ENCODE measurements at regions of chr7 and their contacts with region 1.

Region 1: DNA sequence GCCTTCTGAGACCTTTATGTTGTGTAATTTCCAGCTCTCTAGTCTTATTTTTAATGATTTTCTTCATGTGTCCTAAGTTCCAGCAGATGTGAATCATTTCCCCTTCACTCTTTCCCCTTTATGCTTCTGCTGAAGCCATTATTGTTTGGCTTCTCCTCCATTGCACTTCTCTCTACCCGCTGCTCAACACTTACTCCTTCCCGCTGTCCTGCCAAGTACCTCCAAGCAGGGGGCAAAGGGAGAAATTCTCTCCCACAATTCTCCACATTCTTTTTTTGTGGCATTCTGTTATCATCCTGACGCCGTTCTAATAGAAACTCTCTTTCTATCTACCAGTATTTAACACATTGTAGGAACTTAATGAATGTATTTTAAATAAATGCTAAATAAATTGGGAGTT is 388.9 kb upstream of the TPK1 start:
- DNase-seq: no peak
- H3K4me3 ChIP-seq: no peak overlapping the region
- H3K27ac ChIP-seq: no peak overlapping the region
- H3K4me1 ChIP-seq: no peaks in the 10 kb centered on the region
- H3K27me3 ChIP-seq: no peaks in the 10 kb centered on the region
- CTCF ChIP-seq: no peak

Region 2: GRCh38 chr7:145175366-145175765 is 49.4 kb before region 1 on chr7:
- CTCF ChIA-PET with region 1: no interaction called
- POLR2A ChIA-PET with region 1: no interaction called
- intact Hi-C with region 1: loop called (anchors 1 kb)
- DNase-seq: no peak
- H3K4me3 ChIP-seq: no peak overlapping the region
- H3K27ac ChIP-seq: no peak overlapping the region
- H3K4me1 ChIP-seq: no peaks in the 10 kb centered on the region
- H3K27me3 ChIP-seq: no peaks in the 10 kb centered on the region
- CTCF ChIP-seq: no peak

Region 3: DNA sequence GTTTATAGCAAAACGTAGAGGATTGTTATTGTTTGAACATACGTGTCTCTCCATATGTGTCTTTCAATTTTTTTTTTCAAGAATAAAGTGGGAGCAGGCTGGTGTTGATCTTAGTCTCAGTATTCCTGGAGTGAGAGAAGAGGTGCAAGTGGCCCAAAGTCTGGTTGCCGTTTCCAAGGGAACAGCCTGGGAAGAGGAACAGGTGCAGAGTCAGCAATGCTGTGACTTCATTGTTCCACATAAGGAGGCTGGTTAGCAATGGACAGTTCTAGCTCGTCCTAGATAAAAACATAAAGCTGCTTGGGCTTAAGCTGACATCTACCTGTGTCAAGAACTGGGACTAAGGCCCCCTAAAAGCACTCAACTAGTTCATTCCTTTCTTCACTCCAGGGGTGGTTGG is 237.7 kb after region 1 on chr7:
- CTCF ChIA-PET with region 1: no interaction called
- POLR2A ChIA-PET with region 1: no interaction called
- intact Hi-C with region 1: no loop called
- DNase-seq: no peak
- H3K4me3 ChIP-seq: no peak overlapping the region
- H3K27ac ChIP-seq: no peak overlapping the region
- H3K4me1 ChIP-seq: no peaks in the 10 kb centered on the region
- H3K27me3 ChIP-seq: no peaks in the 10 kb centered on the region
- CTCF ChIP-seq: no peak